ENCODE measurements at regions of chr10 and their contacts with region 1.

Region 1: DNA sequence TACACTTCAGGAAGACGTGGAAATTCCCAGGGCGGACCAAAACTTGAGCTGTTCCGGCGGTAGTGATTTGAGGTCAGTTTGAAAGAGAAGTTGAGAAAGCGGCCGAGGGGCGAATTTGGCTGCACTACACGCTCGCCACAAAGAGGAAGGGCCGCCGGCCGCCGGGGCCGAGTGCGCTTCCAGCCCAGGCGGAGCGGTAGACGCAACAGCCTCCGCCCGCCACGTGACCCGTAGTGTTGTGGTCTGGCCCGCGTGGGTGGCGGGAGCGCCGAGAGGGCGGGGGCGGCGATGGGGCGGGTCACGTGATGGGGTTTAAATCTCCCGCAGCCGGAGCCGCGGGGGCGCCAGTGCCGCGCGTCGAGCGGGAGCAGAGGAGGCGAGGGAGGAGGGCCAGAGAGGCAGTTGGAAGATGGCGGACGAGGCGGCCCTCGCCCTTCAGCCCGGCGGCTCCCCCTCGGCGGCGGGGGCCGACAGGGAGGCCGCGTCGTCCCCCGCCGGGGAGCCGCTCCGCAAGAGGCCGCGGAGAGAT is at the start of gene SIRT1:
- DNase-seq: peak; percentile 94 to 97 (median 97)
- H3K4me3 ChIP-seq: peak within 1 kb of the TSS; percentile 76 to 93 (median 84)
- H3K27ac ChIP-seq: peak within 1 kb of the TSS; percentile 66 to 76
- H3K4me1 ChIP-seq: peaks cover 2 to 13% (median 10%) of the 10 kb centered on the region in 4 experiments
- H3K27me3 ChIP-seq: no peaks in the 10 kb centered on the region

Region 2: DNA sequence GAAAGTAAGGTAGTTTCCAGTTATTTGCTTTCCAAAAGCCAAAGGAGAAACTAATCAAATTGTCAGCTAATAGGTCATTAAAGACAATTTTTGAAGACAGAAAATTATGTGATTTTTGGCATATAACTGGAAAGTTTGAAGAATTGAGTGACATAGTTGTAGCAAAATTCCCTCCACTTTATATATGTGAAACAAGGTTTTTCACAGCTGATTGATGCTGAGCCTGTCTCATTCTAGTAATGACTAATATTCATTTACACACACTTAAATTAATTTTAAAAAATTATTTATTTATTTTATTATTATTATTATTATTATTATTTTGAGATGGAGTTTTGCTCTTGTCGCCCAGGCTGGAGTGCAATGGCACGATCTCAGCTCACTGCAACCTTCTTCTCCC is 16.2 kb before region 1 on chr10:
- CTCF ChIA-PET with region 1: interaction called, 10 read pairs
- POLR2A ChIA-PET with region 1: interaction called, 4 read pairs
- DNase-seq: no peak
- H3K4me3 ChIP-seq: no peak overlapping the region
- H3K27ac ChIP-seq: no peak overlapping the region
- H3K4me1 ChIP-seq: peaks cover 0 to 3% (median 0%) of the 10 kb centered on the region in 4 experiments
- H3K27me3 ChIP-seq: no peaks in the 10 kb centered on the region